ENCODE measurements at regions of chr2 and their contacts with region 1.

Region 1: DNA sequence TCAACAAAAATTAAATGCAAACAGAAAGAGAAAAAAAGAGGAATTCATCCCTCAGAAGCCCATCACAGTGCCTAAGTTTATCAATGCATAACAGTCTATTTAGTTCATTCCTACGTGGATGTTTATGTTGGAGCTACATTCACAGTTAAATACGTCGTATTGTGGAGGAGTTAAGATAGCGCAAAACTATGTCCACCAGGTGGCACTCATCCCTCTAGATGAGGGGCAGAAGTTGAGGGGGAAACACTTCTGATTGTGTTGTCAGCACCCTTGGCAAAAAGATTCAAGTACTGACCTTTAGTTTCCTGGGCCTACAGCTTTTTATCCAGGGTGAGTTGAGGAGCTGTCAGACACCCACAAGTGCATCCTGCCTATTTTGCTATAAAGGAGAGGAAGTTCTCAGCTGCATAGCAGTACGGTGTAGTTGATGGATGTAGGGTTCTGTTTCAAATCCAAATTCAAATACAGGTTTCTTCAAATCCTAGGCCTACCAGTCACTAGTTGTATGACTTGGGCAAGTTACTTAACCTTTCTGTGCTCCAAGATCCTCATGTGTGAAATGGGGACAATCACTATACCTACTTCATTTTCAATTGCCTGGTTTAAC is 26.8 kb upstream of the MYO1B start:
- DNase-seq: peak; percentile 80
- ATAC-seq: peak; percentile 97
- H3K4me3 ChIP-seq: no peak overlapping the region
- H3K27ac ChIP-seq: no peak overlapping the region
- H3K4me1 ChIP-seq: peaks cover 27% of the 10 kb centered on the region
- H3K27me3 ChIP-seq: no peaks in the 10 kb centered on the region
- CTCF ChIP-seq: peak; percentile 93
- EP300 ChIP-seq: no peak
- POLR2A ChIP-seq: no peak
- RAD21 ChIP-seq: peak; percentile 83

Region 2: GRCh38 chr2:191051825-191052778 is 166.3 kb before region 1 on chr2:
- CTCF ChIA-PET with region 1: interaction called, 4 read pairs
- POLR2A ChIA-PET with region 1: no interaction called
- in situ Hi-C with region 1: no loop called
- intact Hi-C with region 1: loop called (anchors 5 kb)
- DNase-seq: peak; percentile 56
- ATAC-seq: peak; percentile 72
- H3K4me3 ChIP-seq: no peak overlapping the region
- H3K27ac ChIP-seq: no peak overlapping the region
- H3K4me1 ChIP-seq: peaks cover 17% of the 10 kb centered on the region
- H3K27me3 ChIP-seq: peaks cover 0 to 1% of the 10 kb centered on the region in 2 experiments; a peak in 2 of 5 replicates
- CTCF ChIP-seq: peak; percentile 64
- EP300 ChIP-seq: no peak
- POLR2A ChIP-seq: no peak
- RAD21 ChIP-seq: no peak

Region 3: DNA sequence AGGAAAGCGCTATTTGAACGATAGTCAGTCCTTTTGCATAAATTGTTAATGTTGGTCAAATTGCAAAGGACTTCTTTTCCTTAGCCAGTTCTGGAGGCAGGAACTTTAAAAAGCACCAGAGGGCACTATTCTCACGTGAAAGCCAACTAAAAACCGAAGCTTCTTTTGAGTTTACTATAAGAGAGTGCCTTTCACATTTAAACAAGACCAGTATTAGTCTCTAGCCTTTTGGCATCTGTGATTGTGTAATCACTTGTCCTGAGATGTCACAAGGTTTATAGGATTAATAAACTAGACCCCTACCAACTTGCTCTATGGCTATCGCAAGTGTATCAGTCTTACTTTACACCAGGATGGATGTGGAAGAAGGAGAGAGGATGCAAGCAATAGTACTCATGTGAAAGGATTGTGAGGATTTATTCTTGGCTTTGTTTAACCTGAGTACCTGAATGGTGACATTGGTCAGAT is 53.2 kb before region 1 on chr2:
- CTCF ChIA-PET with region 1: interaction called, 4 read pairs
- POLR2A ChIA-PET with region 1: no interaction called
- in situ Hi-C with region 1: no loop called
- intact Hi-C with region 1: loop called (anchors 2 kb)
- DNase-seq: peak; percentile 23
- ATAC-seq: peak; percentile 82
- H3K4me3 ChIP-seq: no peak overlapping the region
- H3K27ac ChIP-seq: no peak overlapping the region
- H3K4me1 ChIP-seq: peaks cover 16% of the 10 kb centered on the region
- H3K27me3 ChIP-seq: no peaks in the 10 kb centered on the region
- CTCF ChIP-seq: peak; percentile 60
- EP300 ChIP-seq: no peak
- POLR2A ChIP-seq: no peak
- RAD21 ChIP-seq: no peak

Region 4: GRCh38 chr2:191302459-191303139 is 84.2 kb after region 1 on chr2:
- CTCF ChIA-PET with region 1: no interaction called
- POLR2A ChIA-PET with region 1: no interaction called
- in situ Hi-C with region 1: no loop called
- intact Hi-C with region 1: loop called (anchors 1 kb)
- DNase-seq: peak; percentile 58
- ATAC-seq: peak; percentile 96
- H3K4me3 ChIP-seq: no peak overlapping the region
- H3K27ac ChIP-seq: no peak overlapping the region
- H3K4me1 ChIP-seq: peaks cover 18% of the 10 kb centered on the region
- H3K27me3 ChIP-seq: no peaks in the 10 kb centered on the region
- CTCF ChIP-seq: peak; percentile 64
- EP300 ChIP-seq: no peak
- POLR2A ChIP-seq: no peak
- RAD21 ChIP-seq: peak; percentile 58

Region 5: DNA sequence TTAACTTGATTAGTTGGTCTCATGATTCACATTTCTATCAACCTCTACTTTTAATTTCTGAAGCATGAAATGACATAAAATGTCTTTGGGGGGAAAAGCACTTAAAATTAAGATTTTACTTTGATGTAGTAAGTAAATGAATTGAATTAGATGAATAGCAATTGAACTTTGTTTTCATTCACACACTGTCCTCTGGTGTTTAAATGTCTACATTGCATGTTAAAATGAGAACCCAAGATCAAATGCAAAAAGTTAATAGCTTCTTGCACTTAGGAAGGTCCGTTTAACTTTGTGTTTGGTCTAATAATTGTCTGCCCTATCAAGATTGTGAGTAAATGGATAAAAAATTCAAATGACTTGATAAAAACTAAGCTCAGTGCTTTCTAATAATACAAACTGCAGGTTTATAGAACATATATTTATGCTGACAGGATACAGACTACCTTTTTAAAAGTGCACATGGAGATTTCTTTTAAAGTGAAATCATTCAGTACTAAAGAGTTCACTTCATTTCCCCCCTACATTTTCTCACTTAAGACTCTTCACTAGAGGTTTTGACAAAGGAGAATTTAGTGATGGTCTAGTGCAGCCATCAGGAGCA is 303.3 kb after region 1 on chr2:
- CTCF ChIA-PET with region 1: interaction called, 22 read pairs
- POLR2A ChIA-PET with region 1: no interaction called
- in situ Hi-C with region 1: loop called (anchors 5 kb)
- intact Hi-C with region 1: loop called (anchors 1 kb)
- DNase-seq: peak; percentile 40
- ATAC-seq: no peak
- H3K4me3 ChIP-seq: no peak overlapping the region
- H3K27ac ChIP-seq: no peak overlapping the region
- H3K4me1 ChIP-seq: no peaks in the 10 kb centered on the region
- H3K27me3 ChIP-seq: peaks cover 0 to 11% of the 10 kb centered on the region in 2 experiments; a peak in 2 of 5 replicates
- CTCF ChIP-seq: peak; percentile 74
- EP300 ChIP-seq: no peak
- POLR2A ChIP-seq: no peak
- RAD21 ChIP-seq: 0 out of 2 replicates have a peak, but pooled peaks have one; percentile 31

Measured in HepG2 (cell line).